ENCODE measurements at regions of chr20 and their contacts with region 1.

Region 1: DNA sequence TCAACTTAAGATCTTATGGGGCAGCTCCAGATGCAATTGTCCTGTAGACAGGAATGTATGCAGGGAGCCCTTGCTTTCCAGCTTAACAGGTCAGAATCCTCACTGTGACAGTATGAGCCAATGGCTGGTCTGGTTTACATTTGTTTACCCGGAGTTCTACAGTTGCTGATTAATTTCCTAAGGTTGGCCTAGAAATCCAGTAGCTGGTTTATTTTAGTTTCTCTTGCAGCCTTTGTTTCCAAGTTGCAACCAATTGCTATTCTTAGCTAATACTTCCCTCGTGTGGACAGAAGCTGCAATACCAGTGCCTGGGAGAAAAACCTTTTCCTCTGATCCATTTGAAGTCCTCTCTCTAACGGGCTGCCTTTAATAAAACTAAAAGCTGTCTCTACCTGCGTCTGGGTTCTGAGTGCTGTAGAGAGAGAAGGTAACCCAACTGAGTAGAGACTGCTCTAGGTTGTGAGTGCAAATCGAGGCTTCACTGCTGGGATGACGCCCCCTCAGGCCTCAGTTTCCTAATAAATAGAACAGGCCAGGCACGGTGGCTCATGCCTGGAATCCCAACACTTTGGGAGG is 45.9 kb downstream of the ZNF217 start:
- DNase-seq: no peak
- ATAC-seq: peak; percentile 60
- H3K4me3 ChIP-seq: no peak overlapping the region
- H3K27ac ChIP-seq: no peak overlapping the region
- H3K4me1 ChIP-seq: no peaks in the 10 kb centered on the region
- H3K27me3 ChIP-seq: no peaks in the 10 kb centered on the region
- CTCF ChIP-seq: peak; percentile 29 to 62 (median 54)
- POLR2A ChIP-seq: no peak

Region 2: GRCh38 chr20:52312132-52312729 is 1235.5 kb before region 1 on chr20:
- in situ Hi-C with region 1: loop called in 2 of 4 experiments (anchors 5 to 25 kb)
- intact Hi-C with region 1: no loop called
- DNase-seq: no peak
- ATAC-seq: no peak
- H3K4me3 ChIP-seq: no peak overlapping the region
- H3K27ac ChIP-seq: no peak overlapping the region
- H3K4me1 ChIP-seq: peaks cover 3 to 5% of the 10 kb centered on the region in 2 donors
- H3K27me3 ChIP-seq: no peaks in the 10 kb centered on the region
- CTCF ChIP-seq: peak in 3 of 5 experiments; percentile 14 to 50 (median 50)
- POLR2A ChIP-seq: no peak

Region 3: DNA sequence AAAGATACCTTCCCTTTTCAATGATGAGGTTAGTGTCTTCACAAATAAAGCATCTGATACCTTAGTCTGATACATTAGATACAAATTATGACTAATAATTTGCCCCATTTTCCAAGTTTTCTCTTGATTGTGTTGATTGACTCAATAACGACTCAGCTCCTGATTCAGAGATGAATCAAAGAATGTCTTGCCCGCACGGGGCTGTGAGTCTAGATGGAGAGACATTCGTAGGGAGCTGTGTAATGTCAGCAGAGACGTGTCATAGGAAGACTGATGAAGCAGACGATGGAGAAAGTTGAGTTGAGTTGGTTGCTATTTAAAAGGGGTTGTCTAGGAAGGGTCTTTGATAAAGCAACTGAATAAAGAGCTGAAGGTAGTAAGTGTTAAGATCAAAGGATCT is 497.4 kb before region 1 on chr20:
- in situ Hi-C with region 1: no loop called
- intact Hi-C with region 1: no loop called
- DNase-seq: no peak
- ATAC-seq: no peak
- H3K4me3 ChIP-seq: no peak overlapping the region
- H3K27ac ChIP-seq: no peak overlapping the region
- H3K4me1 ChIP-seq: no peaks in the 10 kb centered on the region
- H3K27me3 ChIP-seq: no peaks in the 10 kb centered on the region
- CTCF ChIP-seq: no peak
- POLR2A ChIP-seq: no peak

Region 4: GRCh38 chr20:53492212-53492611 is 55.5 kb before region 1 on chr20:
- in situ Hi-C with region 1: no loop called
- intact Hi-C with region 1: no loop called
- DNase-seq: no peak
- ATAC-seq: no peak
- H3K4me3 ChIP-seq: no peak overlapping the region
- H3K27ac ChIP-seq: no peak overlapping the region
- H3K4me1 ChIP-seq: no peaks in the 10 kb centered on the region
- H3K27me3 ChIP-seq: no peaks in the 10 kb centered on the region
- CTCF ChIP-seq: no peak
- POLR2A ChIP-seq: no peak

Region 5: GRCh38 chr20:53559816-53560215 is 12.1 kb after region 1 on chr20:
- in situ Hi-C with region 1: no loop called
- intact Hi-C with region 1: no loop called
- DNase-seq: no peak
- ATAC-seq: no peak
- H3K4me3 ChIP-seq: no peak overlapping the region
- H3K27ac ChIP-seq: no peak overlapping the region
- H3K4me1 ChIP-seq: no peaks in the 10 kb centered on the region
- H3K27me3 ChIP-seq: no peaks in the 10 kb centered on the region
- CTCF ChIP-seq: no peak
- POLR2A ChIP-seq: no peak